ENCODE measurements at regions of chr4 and their contacts with region 1.

Region 1: DNA sequence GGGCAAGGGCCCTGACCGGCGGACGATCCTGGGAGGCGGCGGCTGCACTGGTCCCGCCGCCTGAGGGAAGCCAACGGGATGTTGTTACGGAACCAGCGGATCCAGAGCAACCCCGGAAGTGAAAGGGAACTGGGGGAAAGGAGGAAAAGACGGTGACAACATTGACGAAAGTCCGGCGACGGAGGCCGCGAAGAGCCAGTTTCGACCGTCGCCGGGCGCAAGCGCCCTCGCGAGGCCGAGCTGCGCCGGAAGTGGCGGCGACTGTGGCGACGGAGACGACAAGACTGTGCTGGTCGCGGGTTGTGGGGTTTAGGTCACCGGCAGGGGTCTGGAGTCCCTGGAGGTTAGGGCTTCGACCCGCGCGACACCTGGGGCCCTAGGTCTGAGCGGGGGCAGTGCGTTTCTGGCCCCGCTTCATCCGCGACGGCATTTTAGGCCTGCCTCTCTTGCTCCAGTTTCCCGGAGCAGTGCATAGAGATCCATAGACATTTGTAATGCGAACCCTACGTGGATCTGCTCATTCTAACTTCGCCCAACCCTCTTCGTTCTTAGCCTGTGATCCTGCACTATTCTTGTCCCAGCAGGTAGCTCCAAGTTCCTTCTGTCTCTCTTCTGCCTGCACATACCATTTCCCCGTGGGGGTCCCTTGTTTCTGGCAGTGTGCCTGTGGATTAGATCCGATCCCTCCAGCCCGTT is at the start of gene BOD1L1:
- DNase-seq: peak; percentile 91
- H3K4me3 ChIP-seq: peak within 1 kb of the TSS; percentile 71 to 91 (median 81)
- H3K27ac ChIP-seq: peak within 1 kb of the TSS; percentile 90
- H3K4me1 ChIP-seq: peaks cover 16% of the 10 kb centered on the region
- H3K27me3 ChIP-seq: no peaks in the 10 kb centered on the region
- CTCF ChIP-seq: peak; percentile 42 to 76
- POLR2A ChIP-seq: peak; percentile 98
- total RNA-seq, gene BOD1L1: 27.5 and 31.2 TPM in 2 replicates

Region 2: GRCh38 chr4:13484122-13484748 is 143.5 kb before region 1 on chr4 and contains the start of gene RAB28:
- CTCF ChIA-PET with region 1: no interaction called
- POLR2A ChIA-PET with region 1: no interaction called
- dilution Hi-C with region 1: no loop called
- intact Hi-C with region 1: loop called (anchors 1 kb)
- DNase-seq: peak; percentile 93
- H3K4me3 ChIP-seq: peak within 1 kb of the TSS; percentile 64 to 82 (median 66)
- H3K27ac ChIP-seq: peak within 1 kb of the TSS; percentile 97
- H3K4me1 ChIP-seq: peaks cover 11% of the 10 kb centered on the region
- H3K27me3 ChIP-seq: peaks cover 4 to 15% of the 10 kb centered on the region in 2 experiments
- CTCF ChIP-seq: no peak
- POLR2A ChIP-seq: no peak
- total RNA-seq, gene RAB28: 13.2 and 15.5 TPM in 2 replicates

Region 3: DNA sequence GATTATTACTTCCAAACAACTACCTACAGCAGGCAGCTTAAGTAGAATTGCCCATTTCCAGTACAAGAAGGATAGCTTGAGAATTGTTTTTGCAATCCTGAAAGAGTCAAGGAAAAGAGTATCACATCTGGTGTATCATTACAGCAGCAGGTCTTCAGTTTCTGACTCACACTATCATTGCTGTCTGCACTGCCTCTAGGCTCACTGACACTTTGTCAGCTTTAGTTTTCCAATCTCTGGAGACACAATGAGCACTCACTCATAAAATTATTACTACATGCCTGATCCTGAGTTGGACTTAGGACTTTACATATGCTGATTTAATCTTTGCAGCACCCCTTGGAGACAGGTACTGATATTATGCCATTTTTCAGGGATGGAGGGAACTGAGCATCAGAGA is 244.4 kb after region 1 on chr4:
- CTCF ChIA-PET with region 1: no interaction called
- POLR2A ChIA-PET with region 1: no interaction called
- dilution Hi-C with region 1: no loop called
- intact Hi-C with region 1: no loop called
- DNase-seq: no peak
- H3K4me3 ChIP-seq: no peak overlapping the region
- H3K27ac ChIP-seq: no peak overlapping the region
- H3K4me1 ChIP-seq: no peaks in the 10 kb centered on the region
- H3K27me3 ChIP-seq: no peaks in the 10 kb centered on the region
- CTCF ChIP-seq: no peak
- POLR2A ChIP-seq: no peak

Region 4: GRCh38 chr4:14178421-14178820 is 550.7 kb after region 1 on chr4:
- CTCF ChIA-PET with region 1: no interaction called
- POLR2A ChIA-PET with region 1: no interaction called
- dilution Hi-C with region 1: loop called (anchors 25 kb)
- intact Hi-C with region 1: no loop called
- DNase-seq: peak; percentile 62
- H3K4me3 ChIP-seq: peak overlapping the region in 1 of 3 experiments; percentile 0
- H3K27ac ChIP-seq: peak overlapping the region; percentile 42
- H3K4me1 ChIP-seq: peaks cover 45% of the 10 kb centered on the region
- H3K27me3 ChIP-seq: no peaks in the 10 kb centered on the region
- CTCF ChIP-seq: no peak
- POLR2A ChIP-seq: no peak